Esophagus muscularis mucosa (tissue), 4 donors: ENCODE measurements at regions of chr5 and their contacts with region 1.

Region 1: GRCh38 chr5:79514391-79515105 is 614 bp upstream of the HOMER1 start:
- DNase-seq: peak; percentile 97
- H3K4me3 ChIP-seq: peak overlapping the region; percentile 74 to 97 (median 89)
- H3K27ac ChIP-seq: peak overlapping the region; percentile 95 to 100 (median 97)
- H3K4me1 ChIP-seq: peaks cover 0 to 41% (median 30%) of the 10 kb centered on the region in 4 donors
- H3K27me3 ChIP-seq: no peaks in the 10 kb centered on the region
- CTCF ChIP-seq: no peak
- EP300 ChIP-seq: peak; percentile 76
- POLR2A ChIP-seq: peak; percentile 6

Region 2: GRCh38 chr5:79173626-79174025 is 340.9 kb before region 1 on chr5:
- intact Hi-C with region 1: no loop called
- DNase-seq: no peak
- H3K4me3 ChIP-seq: no peak overlapping the region
- H3K27ac ChIP-seq: no peak overlapping the region
- H3K4me1 ChIP-seq: peaks cover 0 to 36% (median 27%) of the 10 kb centered on the region in 4 donors
- H3K27me3 ChIP-seq: no peaks in the 10 kb centered on the region
- CTCF ChIP-seq: no peak
- EP300 ChIP-seq: no peak
- POLR2A ChIP-seq: no peak

Region 3: GRCh38 chr5:79235634-79236363 is 278.7 kb before region 1 on chr5 and contains the start of gene JMY:
- intact Hi-C with region 1: loop called (anchors 10 kb)
- DNase-seq: peak; percentile 94
- H3K4me3 ChIP-seq: peak within 1 kb of the TSS; percentile 88 to 98 (median 92)
- H3K27ac ChIP-seq: peak within 1 kb of the TSS; percentile 94 to 98 (median 97)
- H3K4me1 ChIP-seq: peaks cover 28 to 46% (median 42%) of the 10 kb centered on the region in 4 donors
- H3K27me3 ChIP-seq: peaks cover 0 to 13% (median 0%) of the 10 kb centered on the region in 4 donors
- CTCF ChIP-seq: peak; percentile 5 to 37 (median 16)
- EP300 ChIP-seq: no peak
- POLR2A ChIP-seq: peak; percentile 39
- total RNA-seq, gene JMY: 33.2 to 64.2 (median 43.2) TPM

Region 4: GRCh38 chr5:79333852-79334557 is 180.5 kb before region 1 on chr5:
- intact Hi-C with region 1: no loop called
- DNase-seq: no peak
- H3K4me3 ChIP-seq: no peak overlapping the region
- H3K27ac ChIP-seq: no peak overlapping the region
- H3K4me1 ChIP-seq: no peaks in the 10 kb centered on the region
- H3K27me3 ChIP-seq: no peaks in the 10 kb centered on the region
- CTCF ChIP-seq: no peak
- EP300 ChIP-seq: no peak
- POLR2A ChIP-seq: no peak

Region 5: GRCh38 chr5:79612667-79613198 is 98.2 kb after region 1 on chr5:
- intact Hi-C with region 1: loop called (anchors 5 kb)
- DNase-seq: no peak
- H3K4me3 ChIP-seq: peak overlapping the region; percentile 86 to 95 (median 90)
- H3K27ac ChIP-seq: peak overlapping the region; percentile 91 to 94 (median 92)
- H3K4me1 ChIP-seq: peaks cover 13 to 40% (median 26%) of the 10 kb centered on the region in 4 donors
- H3K27me3 ChIP-seq: no peaks in the 10 kb centered on the region
- CTCF ChIP-seq: no peak
- EP300 ChIP-seq: no peak
- POLR2A ChIP-seq: no peak